Heart left ventricle (tissue), 16 donors: ENCODE measurements at regions of chr16 and their contacts with region 1.

Region 1: DNA sequence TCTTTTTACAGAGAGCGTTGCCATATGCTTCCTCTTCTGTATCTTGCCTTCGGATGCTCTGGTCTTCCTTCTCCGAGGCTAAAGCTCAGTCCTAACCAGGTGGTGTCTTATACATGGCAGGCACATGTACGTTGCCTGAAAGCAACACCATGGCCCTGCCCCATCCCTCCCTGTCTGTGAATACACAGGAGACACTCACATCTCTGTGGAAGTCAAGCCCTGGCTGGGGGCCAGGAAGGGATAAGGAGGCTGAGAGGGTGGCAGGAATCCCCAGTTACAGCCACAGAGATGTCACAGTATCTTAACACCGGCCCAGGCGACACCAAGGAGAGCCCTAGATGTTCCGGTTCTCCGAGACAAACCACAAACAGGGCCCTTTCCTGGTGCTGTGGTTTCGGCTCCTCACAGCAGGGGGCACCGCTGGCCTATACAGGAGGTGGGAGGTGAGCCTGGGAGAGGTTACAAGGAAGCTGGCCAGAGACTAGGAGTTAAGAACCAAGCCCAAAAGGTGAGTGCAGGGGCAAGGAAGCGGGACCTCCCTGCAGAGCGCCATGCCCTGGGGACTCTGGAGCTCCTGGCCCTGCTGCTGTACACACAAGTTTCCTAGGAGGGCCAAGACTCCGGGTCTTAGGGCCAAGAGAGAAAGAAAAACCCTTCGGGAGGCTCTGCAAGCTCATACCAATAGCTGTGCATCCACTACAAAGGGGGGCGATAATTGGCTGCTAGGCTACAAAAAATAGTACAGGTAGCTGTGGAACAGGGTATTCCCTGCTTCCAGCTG is 41.7 kb downstream of the SRL start:
- DNase-seq: peak; percentile 48 to 82 (median 60)
- ATAC-seq: peak; percentile 60 to 80 (median 68)
- H3K4me3 ChIP-seq: no peak overlapping the region
- H3K27ac ChIP-seq: peak overlapping the region in 3 of 12 donors; percentile 4 to 17 (median 7)
- H3K4me1 ChIP-seq: peaks cover 0 to 18% (median 6%) of the 10 kb centered on the region in 12 donors
- H3K27me3 ChIP-seq: no peaks in the 10 kb centered on the region
- CTCF ChIP-seq: peak; percentile 52 to 75 (median 66)
- POLR2A ChIP-seq: no peak

Region 2: GRCh38 chr16:3950343-3951193 is 249.6 kb before region 1 on chr16:
- intact Hi-C with region 1: no loop called
- DNase-seq: peak; percentile 85 to 93 (median 89)
- ATAC-seq: peak; percentile 58 to 85 (median 80)
- H3K4me3 ChIP-seq: peak overlapping the region in 8 of 12 donors; percentile 24 to 44 (median 36)
- H3K27ac ChIP-seq: peak overlapping the region; percentile 60 to 89 (median 84)
- H3K4me1 ChIP-seq: peaks cover 4 to 65% (median 36%) of the 10 kb centered on the region in 12 donors
- H3K27me3 ChIP-seq: peaks cover 0 to 4% (median 0%) of the 10 kb centered on the region in 9 donors
- CTCF ChIP-seq: no peak
- POLR2A ChIP-seq: peak in 1 of 2 donors; percentile 16

Region 3: DNA sequence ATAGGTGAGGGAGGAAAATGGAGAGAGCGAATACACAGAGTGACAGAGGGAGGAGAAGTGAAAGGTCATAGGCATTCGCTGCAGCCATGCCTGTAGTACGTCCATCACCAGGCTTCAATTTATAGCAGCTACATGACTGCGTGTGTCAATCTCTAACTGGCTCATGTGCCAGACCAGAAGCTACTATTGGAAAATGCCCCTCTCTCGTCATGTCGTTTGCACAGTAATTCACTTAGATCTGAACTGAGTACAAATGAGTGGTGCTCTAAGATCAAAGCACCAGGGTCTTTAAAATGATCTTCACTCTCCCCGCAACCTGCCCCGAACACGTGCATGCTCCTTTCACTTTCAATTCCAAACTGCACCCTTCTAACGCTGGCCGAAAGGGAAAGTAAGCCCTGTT is 135.2 kb before region 1 on chr16:
- intact Hi-C with region 1: no loop called
- DNase-seq: no peak
- ATAC-seq: peak in 3 of 4 donors; percentile 47 to 67 (median 54)
- H3K4me3 ChIP-seq: peak overlapping the region in 8 of 12 donors; percentile 5 to 29 (median 20)
- H3K27ac ChIP-seq: peak overlapping the region in 3 of 12 donors; percentile 6 to 20 (median 12)
- H3K4me1 ChIP-seq: peaks cover 0 to 11% (median 1%) of the 10 kb centered on the region in 12 donors
- H3K27me3 ChIP-seq: no peaks in the 10 kb centered on the region
- CTCF ChIP-seq: no peak
- POLR2A ChIP-seq: no peak

Region 4: GRCh38 chr16:4239020-4239419 is 38.8 kb after region 1 on chr16:
- intact Hi-C with region 1: loop called in 4 of 10 experiments (anchors 5 kb)
- DNase-seq: peak in 3 of 5 donors; percentile 63 to 66 (median 65)
- ATAC-seq: peak; percentile 27 to 59 (median 52)
- H3K4me3 ChIP-seq: peak overlapping the region; percentile 34 to 62 (median 54)
- H3K27ac ChIP-seq: peak overlapping the region; percentile 74 to 100 (median 94)
- H3K4me1 ChIP-seq: peaks cover 0 to 63% (median 19%) of the 10 kb centered on the region in 12 donors
- H3K27me3 ChIP-seq: no peaks in the 10 kb centered on the region
- CTCF ChIP-seq: no peak
- POLR2A ChIP-seq: no peak

Region 5: DNA sequence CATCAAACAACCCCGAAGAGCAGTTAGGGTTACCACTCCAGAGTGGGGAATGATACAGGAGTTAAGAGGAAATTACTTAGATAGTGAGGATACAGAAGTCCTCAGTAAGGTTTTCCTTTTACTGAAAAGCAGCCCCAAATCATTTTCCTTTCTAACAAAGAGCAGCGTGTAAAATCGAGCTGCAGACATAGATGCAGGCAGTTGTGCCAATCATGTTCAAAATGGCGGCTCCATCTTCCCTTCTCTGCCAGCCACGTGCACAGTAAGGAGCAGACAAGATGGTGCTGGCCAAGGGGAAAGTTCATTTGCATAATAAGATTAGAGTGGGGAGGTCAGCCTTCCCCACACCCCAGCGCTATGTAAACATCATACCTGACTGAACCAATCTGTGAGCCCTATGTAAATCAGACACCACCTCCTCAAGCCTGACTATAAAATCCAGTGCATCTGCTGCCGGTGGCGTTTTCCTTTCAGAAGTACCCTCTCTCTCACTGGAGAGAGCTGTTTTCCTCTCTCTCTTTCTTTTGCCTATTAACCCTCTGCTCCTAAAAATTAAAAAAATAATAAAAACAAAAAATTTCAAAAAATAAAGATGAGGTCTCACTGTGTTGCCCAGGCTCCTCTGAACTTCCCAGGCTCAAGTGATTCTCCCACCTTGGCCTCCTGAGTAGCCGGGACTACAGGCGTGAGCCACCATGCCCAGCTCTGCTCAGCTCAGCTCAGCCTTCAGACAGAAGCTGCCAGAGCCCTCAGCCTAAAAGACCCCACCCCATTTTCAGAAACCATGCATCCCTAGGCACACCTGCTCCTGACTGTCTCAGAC is 44.3 kb after region 1 on chr16:
- intact Hi-C with region 1: loop called in 4 of 10 experiments (anchors 5 kb)
- DNase-seq: no peak
- ATAC-seq: no peak
- H3K4me3 ChIP-seq: no peak overlapping the region
- H3K27ac ChIP-seq: no peak overlapping the region
- H3K4me1 ChIP-seq: peaks cover 0 to 16% (median 4%) of the 10 kb centered on the region in 12 donors
- H3K27me3 ChIP-seq: no peaks in the 10 kb centered on the region
- CTCF ChIP-seq: no peak
- POLR2A ChIP-seq: no peak